HCT116 (cell line): ENCODE measurements at regions of chr15 and their contacts with region 1.

Region 1: DNA sequence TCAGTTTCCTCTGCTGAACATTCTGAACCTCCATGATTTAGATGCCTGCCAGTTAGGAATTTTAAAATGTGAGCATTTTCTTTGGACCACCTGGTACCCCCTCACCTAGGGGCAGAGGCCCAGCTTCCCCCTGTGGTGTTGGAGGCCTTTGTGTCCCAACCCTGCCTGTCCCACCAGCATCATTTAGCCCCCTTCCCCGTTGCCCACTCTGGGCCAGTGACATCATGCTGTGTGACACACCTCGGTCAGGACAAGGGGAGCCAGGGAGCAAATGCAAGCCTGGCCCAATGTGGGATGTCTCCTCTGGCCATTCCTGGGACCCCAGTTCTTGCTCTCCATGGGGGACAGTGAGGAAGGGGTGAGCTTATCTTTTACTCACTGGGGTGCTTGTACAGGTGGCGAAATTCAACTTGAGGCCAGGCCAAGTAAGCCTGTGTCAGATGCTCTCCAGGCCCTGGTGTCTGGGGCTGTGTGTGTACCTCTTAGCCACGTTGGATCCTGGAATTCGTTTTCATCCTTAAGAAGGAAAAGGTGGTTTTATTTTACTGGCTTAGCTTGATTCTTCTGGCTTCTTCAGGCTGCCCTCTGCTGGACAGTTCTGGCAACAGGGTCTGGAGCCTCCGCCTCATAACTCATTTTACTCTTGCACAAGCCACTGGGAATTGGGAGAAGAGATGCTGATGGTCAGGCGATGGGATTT is 49.7 kb upstream of the MYZAP start:
- DNase-seq: peak; percentile 45
- ATAC-seq: peak; percentile 86
- H3K4me3 ChIP-seq: no peak overlapping the region
- H3K27ac ChIP-seq: no peak overlapping the region
- H3K4me1 ChIP-seq: peaks cover 3 to 6% of the 10 kb centered on the region in 2 experiments; a peak in 3 of 4 replicates
- H3K27me3 ChIP-seq: no peaks in the 10 kb centered on the region
- CTCF ChIP-seq: peak; percentile 61 to 89 (median 86); a peak in 5 of 6 replicates
- POLR2A ChIP-seq: no peak
- RAD21 ChIP-seq: peak; percentile 69

Region 2: DNA sequence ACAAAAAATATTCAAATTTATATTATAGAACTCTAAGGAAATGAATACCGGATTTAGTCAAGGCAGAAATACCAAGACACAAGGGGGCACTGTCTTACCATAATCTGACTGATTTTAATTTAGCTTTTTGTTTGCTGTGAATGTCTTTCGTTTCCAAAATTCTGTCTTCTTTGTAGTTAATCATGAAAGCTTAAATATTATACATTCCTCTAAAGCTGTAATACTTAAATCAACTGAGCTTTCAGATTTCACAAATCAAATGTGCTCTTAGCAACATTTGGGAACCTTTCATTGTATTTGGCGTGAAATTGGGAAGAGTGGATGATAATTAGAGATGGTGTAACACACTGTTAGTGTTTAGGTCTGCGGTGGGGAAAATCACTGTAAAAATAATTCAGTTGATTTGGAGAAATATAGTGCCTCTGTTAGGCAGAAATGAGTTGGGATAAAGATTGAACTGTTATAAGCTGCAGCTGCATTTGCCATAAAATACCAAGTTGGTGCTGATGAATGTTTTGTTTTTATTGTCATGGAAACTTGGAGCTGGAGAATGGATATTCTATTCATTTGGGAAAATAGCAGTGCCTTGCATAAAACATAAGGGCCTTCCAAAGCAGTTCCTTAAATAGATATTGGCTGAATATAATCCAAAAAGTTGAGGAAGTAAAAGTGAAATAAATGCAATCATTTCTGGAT is 395.3 kb before region 1 on chr15:
- CTCF ChIA-PET with region 1: interaction called, 12 read pairs
- POLR2A ChIA-PET with region 1: no interaction called
- RAD21 ChIA-PET with region 1: no interaction called
- intact Hi-C with region 1: no loop called
- DNase-seq: peak; percentile 8
- ATAC-seq: no peak
- H3K4me3 ChIP-seq: no peak overlapping the region
- H3K27ac ChIP-seq: no peak overlapping the region
- H3K4me1 ChIP-seq: no peaks in the 10 kb centered on the region
- H3K27me3 ChIP-seq: no peaks in the 10 kb centered on the region
- CTCF ChIP-seq: peak; percentile 44 to 67 (median 48); a peak in 5 of 6 replicates
- POLR2A ChIP-seq: no peak
- RAD21 ChIP-seq: peak; percentile 62

Region 3: DNA sequence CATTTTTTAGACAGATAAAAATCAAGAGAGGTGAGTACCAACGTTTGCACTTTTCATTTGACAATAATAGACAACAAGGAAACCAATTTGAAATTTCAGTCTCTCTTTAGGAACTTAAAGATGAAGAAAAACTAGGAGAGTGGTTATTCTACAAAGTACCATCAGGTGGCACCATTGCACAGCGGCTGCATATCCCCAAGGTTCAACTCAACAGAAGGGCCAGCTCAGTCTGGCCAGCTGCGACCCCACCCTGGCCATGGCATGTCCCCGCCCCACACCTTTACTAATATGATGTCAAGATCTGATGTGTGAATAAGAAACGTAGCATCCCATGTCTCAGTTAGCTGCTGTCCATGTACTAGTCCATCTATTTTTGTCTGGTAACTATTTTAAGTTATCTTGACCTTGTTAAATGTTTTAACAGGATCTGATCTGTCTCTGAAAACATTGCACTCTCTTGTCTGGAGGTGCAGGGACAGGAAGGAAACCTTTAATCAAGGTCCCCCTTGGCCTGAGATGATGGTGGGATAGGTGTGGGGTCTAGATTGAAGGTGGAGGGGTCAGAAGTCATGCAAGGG is 201.2 kb before region 1 on chr15:
- CTCF ChIA-PET with region 1: interaction called, 62 read pairs
- POLR2A ChIA-PET with region 1: no interaction called
- RAD21 ChIA-PET with region 1: interaction called, 3 to 8 read pairs
- intact Hi-C with region 1: loop called (anchors 1 kb)
- DNase-seq: peak; percentile 56
- ATAC-seq: peak; percentile 91
- H3K4me3 ChIP-seq: no peak overlapping the region
- H3K27ac ChIP-seq: no peak overlapping the region
- H3K4me1 ChIP-seq: no peaks in the 10 kb centered on the region
- H3K27me3 ChIP-seq: no peaks in the 10 kb centered on the region
- CTCF ChIP-seq: peak; percentile 75 to 92 (median 90)
- POLR2A ChIP-seq: no peak
- RAD21 ChIP-seq: peak; percentile 94

Region 4: DNA sequence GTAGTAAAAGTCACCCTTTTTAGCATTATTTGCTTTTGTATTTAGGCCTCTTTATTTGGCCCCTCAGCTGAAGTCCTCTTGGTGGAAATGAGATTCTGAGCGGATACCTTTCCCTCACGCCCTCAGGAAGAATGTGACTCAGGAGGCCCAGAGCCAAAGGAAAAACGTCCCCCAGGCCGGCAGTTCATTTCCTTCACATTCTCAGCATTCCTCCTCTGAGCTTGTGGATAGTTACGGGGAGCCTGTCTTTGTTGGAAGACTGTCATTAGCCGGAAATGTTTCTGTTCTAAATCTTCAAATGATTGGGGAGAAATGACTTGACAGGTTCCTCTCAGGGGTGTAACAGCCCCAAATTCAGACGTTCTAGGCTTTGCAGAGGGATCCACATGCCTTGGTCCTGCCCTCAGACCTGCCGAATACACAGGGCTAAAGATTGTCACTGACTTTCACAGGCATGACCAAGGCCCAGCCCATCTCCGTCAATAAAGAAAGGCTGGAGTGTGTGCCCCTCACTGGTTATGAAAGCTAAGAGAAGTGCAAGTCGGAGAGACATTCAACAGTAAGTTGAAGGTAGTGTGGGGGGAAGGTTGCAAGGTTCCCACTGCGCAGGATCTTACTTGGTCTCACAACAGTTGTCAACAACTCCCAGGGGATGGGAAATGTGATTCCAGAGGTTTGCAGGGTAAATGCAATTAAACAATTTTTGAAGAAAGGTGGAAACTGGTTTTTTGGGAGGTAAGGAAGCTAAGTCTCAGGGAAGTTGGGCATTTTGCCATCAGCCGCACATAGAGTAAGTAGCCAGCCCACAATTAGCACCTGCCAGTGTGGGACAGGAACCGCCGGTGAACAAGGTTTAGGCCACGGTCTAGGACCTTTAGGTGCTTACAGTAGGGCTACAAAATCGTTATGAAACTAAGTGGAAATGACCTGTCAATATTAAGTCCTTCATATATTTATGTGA is 10.0 kb after region 1 on chr15:
- CTCF ChIA-PET with region 1: interaction called, 22 read pairs
- POLR2A ChIA-PET with region 1: no interaction called
- RAD21 ChIA-PET with region 1: no interaction called
- intact Hi-C with region 1: no loop called
- DNase-seq: peak; percentile 27
- ATAC-seq: peak; percentile 85
- H3K4me3 ChIP-seq: peak overlapping the region in 1 of 2 experiments; percentile 38; a peak in 2 of 4 replicates
- H3K27ac ChIP-seq: peak overlapping the region; percentile 44; the same call in 1 of the 2 replicates
- H3K4me1 ChIP-seq: peaks cover 31 to 41% of the 10 kb centered on the region in 2 experiments
- H3K27me3 ChIP-seq: no peaks in the 10 kb centered on the region
- CTCF ChIP-seq: no peak
- POLR2A ChIP-seq: no peak
- RAD21 ChIP-seq: no peak